Tibial artery (tissue), 4 donors: ENCODE measurements at regions of chr16 and their contacts with region 1.

Region 1: DNA sequence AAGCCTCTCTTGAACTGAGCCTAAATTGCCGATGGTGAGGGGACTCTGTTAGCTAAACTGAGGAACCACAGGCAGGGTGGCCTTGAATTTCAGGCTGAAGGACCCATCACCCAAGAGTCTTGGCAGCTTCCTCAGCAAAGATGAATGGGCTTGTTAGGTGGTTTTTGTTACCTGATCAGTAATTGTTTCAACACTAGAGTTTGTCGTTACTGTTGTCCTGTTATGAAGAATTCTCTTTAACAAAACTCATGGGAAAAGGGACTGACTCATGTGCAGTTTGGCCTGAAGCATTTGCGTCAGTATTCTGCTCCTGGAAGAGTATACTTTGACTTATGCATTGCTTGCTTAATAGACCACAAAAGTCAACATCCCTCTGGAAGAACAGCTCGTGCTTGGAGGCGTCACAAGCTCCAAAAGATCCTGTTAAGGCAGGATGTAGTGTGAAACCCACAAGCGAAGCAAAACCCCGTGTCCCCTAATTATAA is 206.0 kb downstream of the IRX3 start:
- DNase-seq: no peak
- H3K4me3 ChIP-seq: no peak overlapping the region
- H3K27ac ChIP-seq: no peak overlapping the region
- H3K4me1 ChIP-seq: no peaks in the 10 kb centered on the region
- H3K27me3 ChIP-seq: no peaks in the 10 kb centered on the region
- CTCF ChIP-seq: no peak

Region 2: GRCh38 chr16:53651357-53651756 is 429.2 kb before region 1 on chr16:
- intact Hi-C with region 1: no loop called
- DNase-seq: no peak
- H3K4me3 ChIP-seq: no peak overlapping the region
- H3K27ac ChIP-seq: no peak overlapping the region
- H3K4me1 ChIP-seq: no peaks in the 10 kb centered on the region
- H3K27me3 ChIP-seq: no peaks in the 10 kb centered on the region
- CTCF ChIP-seq: no peak

Region 3: GRCh38 chr16:53822936-53823529 is 257.5 kb before region 1 on chr16:
- intact Hi-C with region 1: no loop called
- DNase-seq: no peak
- H3K4me3 ChIP-seq: no peak overlapping the region
- H3K27ac ChIP-seq: no peak overlapping the region
- H3K4me1 ChIP-seq: peaks cover 0 to 31% (median 13%) of the 10 kb centered on the region in 4 donors
- H3K27me3 ChIP-seq: no peaks in the 10 kb centered on the region
- CTCF ChIP-seq: no peak

Region 4: GRCh38 chr16:54062361-54063278 is 17.9 kb before region 1 on chr16:
- intact Hi-C with region 1: loop called (anchors 2 kb)
- DNase-seq: no peak
- H3K4me3 ChIP-seq: no peak overlapping the region
- H3K27ac ChIP-seq: no peak overlapping the region
- H3K4me1 ChIP-seq: peaks cover 0 to 13% (median 0%) of the 10 kb centered on the region in 4 donors
- H3K27me3 ChIP-seq: no peaks in the 10 kb centered on the region
- CTCF ChIP-seq: no peak

Region 5: GRCh38 chr16:54193665-54194333 is 113.2 kb after region 1 on chr16:
- intact Hi-C with region 1: no loop called
- DNase-seq: peak; percentile 79 to 89
- H3K4me3 ChIP-seq: peak overlapping the region; percentile 42 to 57
- H3K27ac ChIP-seq: peak overlapping the region; percentile 86 to 89
- H3K4me1 ChIP-seq: peaks cover 0 to 18% (median 15%) of the 10 kb centered on the region in 4 donors
- H3K27me3 ChIP-seq: no peaks in the 10 kb centered on the region
- CTCF ChIP-seq: peak; percentile 88 to 90